ENCODE measurements at regions of chr2 and their contacts with region 1.

Region 1: GRCh38 chr2:27281855-27282559 is at the start of gene TRIM54:
- DNase-seq: no peak
- ATAC-seq: no peak
- H3K4me3 Mint-ChIP-seq: no peak within 1 kb of the TSS
- H3K27ac Mint-ChIP-seq: no peak within 1 kb of the TSS
- H3K4me1 Mint-ChIP-seq: peaks cover 6% of the 10 kb centered on the region
- H3K27me3 Mint-ChIP-seq: peaks cover 45% of the 10 kb centered on the region
- total RNA-seq, gene TRIM54: 0.26 to 0.31 TPM

Region 2: DNA sequence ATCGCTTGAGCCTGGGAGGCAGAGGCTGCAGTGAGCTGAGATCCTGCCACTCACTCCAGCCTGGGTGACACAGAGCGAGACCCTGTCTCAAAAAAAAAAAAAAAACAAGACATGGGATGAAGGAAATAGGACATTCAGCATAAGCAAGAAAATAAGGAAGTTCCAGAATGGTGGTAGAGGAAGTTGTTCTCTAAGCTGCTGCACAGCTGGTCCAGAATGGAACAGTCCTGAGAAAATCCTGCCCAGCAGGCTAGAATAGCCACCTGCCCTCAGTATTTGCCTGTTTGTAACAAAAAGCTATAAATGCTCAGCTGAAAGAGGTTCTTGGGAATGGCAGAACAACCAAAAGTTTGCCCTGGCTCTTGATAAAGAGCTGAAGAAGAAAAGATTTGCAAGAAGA is 322.7 kb before region 1 on chr2:
- CTCF ChIA-PET with region 1: interaction called, 19 read pairs
- POLR2A ChIA-PET with region 1: no interaction called
- DNase-seq: no peak
- ATAC-seq: no peak
- H3K4me3 Mint-ChIP-seq: no peak overlapping the region
- H3K27ac Mint-ChIP-seq: no peak overlapping the region
- H3K4me1 Mint-ChIP-seq: no peaks in the 10 kb centered on the region
- H3K27me3 Mint-ChIP-seq: peaks cover 22% of the 10 kb centered on the region

Region 3: DNA sequence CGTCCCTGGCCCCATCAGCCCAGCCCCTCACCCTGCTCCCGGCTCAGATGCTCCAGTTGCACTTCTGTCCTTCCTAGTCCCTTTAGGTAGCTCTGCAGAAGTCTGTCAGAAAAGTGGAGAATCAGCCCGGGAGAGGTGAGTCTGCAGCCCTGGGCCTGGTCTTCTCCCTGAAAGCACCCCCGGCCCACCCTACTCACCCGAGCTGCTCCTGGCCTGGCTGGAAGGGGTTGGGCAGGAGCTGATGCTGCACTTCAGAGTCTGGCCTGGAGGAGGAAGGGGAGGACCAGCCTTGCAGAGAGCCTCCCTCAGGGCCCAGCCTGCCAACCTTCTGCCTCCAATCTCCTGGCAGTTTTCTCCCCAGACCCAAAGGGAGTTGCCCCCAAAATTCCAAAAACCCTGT is 179.7 kb before region 1 on chr2:
- CTCF ChIA-PET with region 1: interaction called, 26 read pairs
- POLR2A ChIA-PET with region 1: no interaction called
- DNase-seq: no peak
- ATAC-seq: no peak
- H3K4me3 Mint-ChIP-seq: no peak overlapping the region
- H3K27ac Mint-ChIP-seq: no peak overlapping the region
- H3K4me1 Mint-ChIP-seq: no peaks in the 10 kb centered on the region
- H3K27me3 Mint-ChIP-seq: peaks cover 7% of the 10 kb centered on the region

Region 4: DNA sequence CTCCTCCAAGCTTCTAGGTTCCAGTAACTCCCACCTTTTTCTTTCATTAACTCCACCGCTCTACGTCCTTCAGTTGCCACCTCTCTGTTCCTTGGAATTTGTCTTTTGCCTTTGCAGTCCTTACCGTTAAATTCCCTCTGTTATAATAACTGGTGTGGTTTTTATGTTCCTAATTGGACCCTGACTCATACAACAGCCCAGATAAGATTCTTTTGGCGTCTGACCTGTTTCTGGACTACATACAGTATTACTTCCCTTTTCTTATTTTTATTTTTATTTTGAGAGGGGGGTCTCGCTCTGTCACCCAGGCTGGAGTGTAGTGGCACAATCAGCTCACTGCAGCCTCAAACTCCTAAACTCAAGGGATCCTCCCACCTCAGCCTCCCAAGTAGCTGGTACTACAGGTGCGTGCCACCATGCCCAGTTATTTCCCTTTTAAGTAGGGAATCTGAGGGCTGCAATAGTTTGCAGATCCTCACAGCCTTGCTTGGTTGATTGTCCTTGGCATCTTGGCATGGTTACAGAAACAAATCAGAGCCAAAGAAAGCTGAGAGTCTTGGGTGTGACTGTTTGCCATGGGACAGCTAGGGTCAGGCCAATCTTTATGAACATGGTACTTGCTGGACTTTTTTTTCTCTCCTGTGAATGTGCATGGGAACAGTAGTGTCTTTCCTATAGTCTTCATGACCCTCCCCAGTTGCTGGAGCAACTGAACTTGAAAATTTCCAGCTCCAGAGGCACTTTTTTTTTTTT is 111.2 kb before region 1 on chr2:
- CTCF ChIA-PET with region 1: interaction called, 24 read pairs
- POLR2A ChIA-PET with region 1: interaction called, 4 read pairs
- DNase-seq: no peak
- ATAC-seq: no peak
- H3K4me3 Mint-ChIP-seq: no peak overlapping the region
- H3K27ac Mint-ChIP-seq: no peak overlapping the region
- H3K4me1 Mint-ChIP-seq: peaks cover 7% of the 10 kb centered on the region
- H3K27me3 Mint-ChIP-seq: peaks cover 14% of the 10 kb centered on the region

Region 5: DNA sequence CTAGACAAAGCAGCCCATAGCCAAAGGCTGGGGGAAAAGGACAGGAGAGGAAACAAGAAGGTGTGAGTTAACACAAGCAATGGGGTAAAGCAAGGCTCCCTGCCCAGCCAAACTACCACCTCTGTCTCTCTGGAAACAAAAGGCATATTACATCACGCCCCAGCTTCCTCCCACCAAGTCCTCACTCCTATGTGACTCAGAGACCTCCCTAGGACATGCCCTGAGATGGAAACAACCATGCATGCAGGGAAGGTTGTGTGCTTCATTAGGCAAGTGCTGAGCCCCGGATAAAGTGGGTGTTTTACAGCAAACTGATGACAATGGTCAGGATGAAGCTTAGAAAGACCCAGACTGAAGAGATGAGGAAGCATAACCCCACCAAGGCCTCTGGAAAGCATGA is 79.2 kb before region 1 on chr2:
- CTCF ChIA-PET with region 1: no interaction called
- POLR2A ChIA-PET with region 1: no interaction called
- DNase-seq: no peak
- ATAC-seq: no peak
- H3K4me3 Mint-ChIP-seq: no peak overlapping the region
- H3K27ac Mint-ChIP-seq: peak overlapping the region; percentile 46
- H3K4me1 Mint-ChIP-seq: peaks cover 16% of the 10 kb centered on the region
- H3K27me3 Mint-ChIP-seq: no peaks in the 10 kb centered on the region

Region 6: DNA sequence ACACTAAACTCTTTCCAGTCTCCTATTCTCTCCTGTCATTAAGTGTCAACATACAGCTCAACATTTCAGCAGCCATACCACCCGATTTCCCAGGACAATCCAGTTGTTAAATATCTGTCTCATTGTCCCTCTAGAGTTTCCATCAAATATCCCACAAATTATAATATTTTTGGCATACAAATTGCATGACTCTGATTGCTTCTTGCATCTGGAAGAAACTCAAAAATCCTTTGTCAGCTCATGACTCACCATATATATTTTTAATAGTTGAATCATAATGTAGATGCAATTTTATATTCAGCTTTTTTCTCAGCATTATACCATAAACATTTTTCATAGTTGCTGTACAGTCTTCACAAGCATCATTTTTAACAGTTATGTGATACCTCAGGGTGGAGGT is 26.3 kb before region 1 on chr2:
- CTCF ChIA-PET with region 1: interaction called, 70 read pairs
- POLR2A ChIA-PET with region 1: no interaction called
- DNase-seq: no peak
- ATAC-seq: no peak
- H3K4me3 Mint-ChIP-seq: no peak overlapping the region
- H3K27ac Mint-ChIP-seq: no peak overlapping the region
- H3K4me1 Mint-ChIP-seq: no peaks in the 10 kb centered on the region
- H3K27me3 Mint-ChIP-seq: peaks cover 25% of the 10 kb centered on the region

Region 7: GRCh38 chr2:27271631-27272340 is 10.2 kb before region 1 on chr2:
- CTCF ChIA-PET with region 1: interaction called, 90 read pairs
- POLR2A ChIA-PET with region 1: no interaction called
- DNase-seq: no peak
- ATAC-seq: no peak
- H3K4me3 Mint-ChIP-seq: no peak overlapping the region
- H3K27ac Mint-ChIP-seq: no peak overlapping the region
- H3K4me1 Mint-ChIP-seq: peaks cover 9% of the 10 kb centered on the region
- H3K27me3 Mint-ChIP-seq: peaks cover 12% of the 10 kb centered on the region